Heart left ventricle (tissue), 16 donors: ENCODE measurements at regions of chr21 and their contacts with region 1.

Region 1: GRCh38 chr21:31866077-31866511 is 6.7 kb upstream of the HUNK start:
- DNase-seq: peak; percentile 84 to 91 (median 89)
- ATAC-seq: peak; percentile 92 to 96 (median 94)
- H3K4me3 ChIP-seq: no peak overlapping the region
- H3K27ac ChIP-seq: no peak overlapping the region
- H3K4me1 ChIP-seq: peaks cover 0 to 9% (median 4%) of the 10 kb centered on the region in 12 donors
- H3K27me3 ChIP-seq: peaks cover 0 to 17% (median 0%) of the 10 kb centered on the region in 9 donors
- CTCF ChIP-seq: peak; percentile 82 to 95 (median 91)
- POLR2A ChIP-seq: no peak

Region 2: GRCh38 chr21:31781737-31782136 is 84.4 kb before region 1 on chr21:
- intact Hi-C with region 1: loop called in 6 of 10 experiments (anchors 5 to 10 kb)
- DNase-seq: peak in 4 of 5 donors; percentile 27 to 58 (median 46)
- ATAC-seq: peak in 3 of 4 donors; percentile 56 to 69 (median 58)
- H3K4me3 ChIP-seq: no peak overlapping the region
- H3K27ac ChIP-seq: no peak overlapping the region
- H3K4me1 ChIP-seq: peaks cover 0 to 6% (median 0%) of the 10 kb centered on the region in 12 donors
- H3K27me3 ChIP-seq: no peaks in the 10 kb centered on the region
- CTCF ChIP-seq: no peak
- POLR2A ChIP-seq: no peak

Region 3: DNA sequence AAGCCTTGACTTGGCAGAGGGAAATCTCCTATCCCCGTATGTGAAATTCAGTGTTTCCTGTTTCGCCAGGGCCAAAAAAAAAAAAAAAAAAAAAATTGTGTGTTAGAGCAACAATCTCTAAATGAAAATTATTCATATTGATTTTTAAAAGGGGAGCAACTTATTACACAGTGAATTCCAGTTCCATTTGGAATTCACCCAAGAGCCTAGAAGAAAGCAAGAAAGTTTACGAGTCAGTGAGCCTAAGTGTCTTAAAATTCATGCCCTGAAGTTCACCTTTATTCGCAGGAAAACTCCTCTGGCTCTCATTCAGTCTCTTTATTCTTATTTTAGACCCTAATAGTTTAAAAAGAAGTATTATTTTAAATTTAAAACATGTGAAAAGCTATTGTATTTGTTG is 35.4 kb before region 1 on chr21:
- intact Hi-C with region 1: no loop called
- DNase-seq: no peak
- ATAC-seq: no peak
- H3K4me3 ChIP-seq: no peak overlapping the region
- H3K27ac ChIP-seq: no peak overlapping the region
- H3K4me1 ChIP-seq: no peaks in the 10 kb centered on the region
- H3K27me3 ChIP-seq: no peaks in the 10 kb centered on the region
- CTCF ChIP-seq: no peak
- POLR2A ChIP-seq: no peak

Region 4: GRCh38 chr21:32135401-32136363 is 269.6 kb after region 1 on chr21:
- intact Hi-C with region 1: loop called in 2 of 10 experiments (anchors 5 to 10 kb)
- DNase-seq: no peak
- ATAC-seq: peak in 1 of 4 donors; percentile 39
- H3K4me3 ChIP-seq: no peak overlapping the region
- H3K27ac ChIP-seq: no peak overlapping the region
- H3K4me1 ChIP-seq: peaks cover 0 to 26% (median 9%) of the 10 kb centered on the region in 12 donors
- H3K27me3 ChIP-seq: no peaks in the 10 kb centered on the region
- CTCF ChIP-seq: no peak
- POLR2A ChIP-seq: no peak

Region 5: GRCh38 chr21:32143241-32143939 is 277.3 kb after region 1 on chr21:
- intact Hi-C with region 1: loop called in 2 of 10 experiments (anchors 5 to 10 kb)
- DNase-seq: peak in 4 of 5 donors; percentile 29 to 65 (median 34)
- ATAC-seq: peak in 3 of 4 donors; percentile 52 to 61 (median 54)
- H3K4me3 ChIP-seq: peak overlapping the region in 1 of 12 donors; percentile 1
- H3K27ac ChIP-seq: peak overlapping the region in 1 of 12 donors; percentile 19
- H3K4me1 ChIP-seq: peaks cover 0 to 13% (median 0%) of the 10 kb centered on the region in 12 donors
- H3K27me3 ChIP-seq: no peaks in the 10 kb centered on the region
- CTCF ChIP-seq: peak in 5 of 12 donors; percentile 7 to 31 (median 14)
- POLR2A ChIP-seq: no peak

Region 6: DNA sequence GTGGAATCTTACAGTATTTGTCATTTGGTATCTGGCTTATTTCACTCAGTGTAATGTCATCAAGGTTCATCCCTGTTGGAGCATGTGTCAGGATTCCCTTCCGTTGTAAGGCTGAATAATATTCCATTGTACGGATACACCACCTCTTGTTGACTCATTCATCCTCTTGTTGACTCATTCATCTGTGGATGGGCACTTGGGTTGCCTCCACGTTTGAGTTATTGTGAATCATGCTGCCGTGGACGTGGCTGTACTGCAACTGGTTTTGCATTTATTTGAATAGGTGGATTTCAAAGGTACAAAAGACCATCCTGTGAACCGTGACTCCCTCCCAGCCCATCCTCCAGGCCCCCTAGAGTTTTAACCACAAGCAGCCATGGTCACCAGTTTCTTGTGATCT is 731.1 kb after region 1 on chr21:
- intact Hi-C with region 1: loop called in 4 of 10 experiments (anchors 10 kb)
- DNase-seq: no peak
- ATAC-seq: no peak
- H3K4me3 ChIP-seq: no peak overlapping the region
- H3K27ac ChIP-seq: no peak overlapping the region
- H3K4me1 ChIP-seq: no peaks in the 10 kb centered on the region
- H3K27me3 ChIP-seq: no peaks in the 10 kb centered on the region
- CTCF ChIP-seq: no peak
- POLR2A ChIP-seq: no peak

Region 7: DNA sequence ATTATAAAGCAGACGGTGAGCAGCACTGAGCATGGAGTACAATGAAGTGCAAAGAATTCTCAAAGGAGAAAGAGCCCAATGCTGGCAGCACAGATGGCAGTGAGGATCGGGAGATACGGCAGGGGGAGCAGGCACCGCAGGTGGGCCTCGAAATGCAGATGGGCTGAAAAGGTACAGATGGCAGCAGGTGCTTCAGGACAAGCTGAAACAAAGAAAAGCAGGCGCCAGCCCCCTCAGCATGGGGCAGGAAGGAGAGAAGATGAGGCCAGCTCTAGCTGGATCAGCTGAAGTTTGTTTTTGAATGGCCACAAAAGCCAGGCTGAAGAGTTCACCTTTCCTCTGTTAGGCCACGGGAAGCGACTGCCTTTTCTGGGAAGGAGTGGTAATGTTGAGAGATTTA is 738.4 kb after region 1 on chr21:
- intact Hi-C with region 1: loop called in 4 of 10 experiments (anchors 10 kb)
- DNase-seq: no peak
- ATAC-seq: no peak
- H3K4me3 ChIP-seq: no peak overlapping the region
- H3K27ac ChIP-seq: no peak overlapping the region
- H3K4me1 ChIP-seq: no peaks in the 10 kb centered on the region
- H3K27me3 ChIP-seq: no peaks in the 10 kb centered on the region
- CTCF ChIP-seq: no peak
- POLR2A ChIP-seq: no peak